GM13976 (cell line): ENCODE measurements at regions of chr11 and their contacts with region 1.

Region 1: GRCh38 chr11:93234602-93235207 is 36.9 kb upstream of the SLC36A4 start:
- DNase-seq: peak; percentile 66
- CTCF ChIP-seq: peak; percentile 89

Region 2: GRCh38 chr11:92685049-92685448 is 549.7 kb before region 1 on chr11:
- in situ Hi-C with region 1: no loop called
- DNase-seq: no peak
- CTCF ChIP-seq: no peak

Region 3: DNA sequence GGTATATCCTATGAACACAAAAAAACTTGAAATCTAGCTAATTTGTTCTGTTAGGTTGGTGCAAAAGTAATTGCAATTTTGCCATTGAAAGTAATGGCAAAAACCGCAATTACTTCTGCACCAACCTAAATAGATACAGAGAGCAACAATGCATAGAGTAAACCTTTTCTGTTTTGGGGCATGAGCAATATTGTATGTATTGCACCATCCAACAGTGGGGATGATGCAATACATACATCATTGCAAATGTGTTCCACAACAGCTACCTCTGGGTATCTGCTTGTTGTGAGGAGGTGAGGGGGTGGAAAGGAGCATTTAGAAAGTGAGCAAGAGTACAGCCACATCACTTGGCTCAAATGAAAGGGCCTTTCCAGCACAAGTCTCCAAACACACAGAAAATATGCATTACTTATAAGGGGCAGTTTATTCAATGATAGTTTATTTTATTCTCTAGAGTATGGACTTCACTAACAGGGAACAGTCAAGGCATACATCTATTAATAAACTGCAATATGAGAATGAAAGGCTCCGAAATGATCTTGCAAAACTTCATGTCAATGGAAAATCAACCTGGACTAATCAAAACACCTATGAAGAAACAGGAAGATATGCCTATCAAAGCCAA is 173.2 kb after region 1 on chr11:
- in situ Hi-C with region 1: no loop called
- DNase-seq: no peak
- CTCF ChIP-seq: no peak

Region 4: GRCh38 chr11:93543292-93543977 is 308.7 kb after region 1 on chr11 and contains the start of gene SMCO4:
- in situ Hi-C with region 1: loop called (anchors 10 kb)
- DNase-seq: peak; percentile 90
- CTCF ChIP-seq: peak; percentile 88

Region 5: GRCh38 chr11:93652161-93652597 is 417.5 kb after region 1 on chr11:
- in situ Hi-C with region 1: loop called (anchors 10 kb)
- DNase-seq: no peak
- CTCF ChIP-seq: peak; percentile 31

Region 6: DNA sequence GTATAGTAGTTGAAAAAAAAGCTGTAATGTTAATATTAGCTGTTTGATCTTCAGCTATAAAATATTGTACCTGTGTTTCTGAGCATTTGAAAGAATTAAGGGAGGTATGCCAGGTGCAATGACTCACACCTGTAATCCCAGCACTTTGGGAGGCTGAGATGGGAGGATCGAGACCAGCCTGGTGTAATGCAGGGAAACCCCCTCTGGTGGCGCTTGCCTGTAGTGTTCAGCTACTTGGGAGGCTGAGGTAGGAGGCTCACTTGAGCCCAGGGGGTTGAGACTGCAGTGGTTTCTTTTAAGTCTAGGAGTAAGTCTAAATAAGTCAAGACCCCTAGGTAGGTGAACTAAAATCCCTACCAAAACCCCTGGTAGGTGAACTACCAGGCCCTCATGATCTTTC is 469.5 kb after region 1 on chr11:
- in situ Hi-C with region 1: no loop called
- DNase-seq: no peak
- CTCF ChIP-seq: no peak